Calu3 (cell line): ENCODE measurements at regions of chr9 and their contacts with region 1.

Region 1: DNA sequence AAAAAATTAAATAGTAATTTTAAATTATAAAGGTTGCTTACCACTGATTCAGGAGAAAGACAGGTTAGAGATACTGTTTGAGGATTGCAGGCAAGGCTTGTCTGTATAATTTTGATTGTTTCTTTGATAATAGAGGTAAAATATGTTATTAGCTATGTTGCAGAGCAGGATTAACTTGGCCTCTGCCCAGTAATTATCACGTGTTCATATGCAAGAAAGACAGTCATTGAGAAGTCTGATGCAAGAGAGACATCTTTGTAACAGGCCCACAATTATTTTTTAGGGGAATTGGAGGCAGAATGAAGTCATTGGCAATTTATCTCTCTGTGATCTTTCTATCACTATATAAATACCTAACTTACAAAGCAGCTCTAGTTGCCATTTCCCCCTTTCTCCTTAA is 45.9 kb downstream of the SLC44A1 start:
- DNase-seq: peak; percentile 30
- H3K4me3 Mint-ChIP-seq: no peak overlapping the region
- H3K27ac Mint-ChIP-seq: peak overlapping the region; percentile 68
- H3K4me1 Mint-ChIP-seq: peaks cover 23% of the 10 kb centered on the region
- H3K27me3 Mint-ChIP-seq: no peaks in the 10 kb centered on the region
- CTCF ChIP-seq: no peak

Region 2: DNA sequence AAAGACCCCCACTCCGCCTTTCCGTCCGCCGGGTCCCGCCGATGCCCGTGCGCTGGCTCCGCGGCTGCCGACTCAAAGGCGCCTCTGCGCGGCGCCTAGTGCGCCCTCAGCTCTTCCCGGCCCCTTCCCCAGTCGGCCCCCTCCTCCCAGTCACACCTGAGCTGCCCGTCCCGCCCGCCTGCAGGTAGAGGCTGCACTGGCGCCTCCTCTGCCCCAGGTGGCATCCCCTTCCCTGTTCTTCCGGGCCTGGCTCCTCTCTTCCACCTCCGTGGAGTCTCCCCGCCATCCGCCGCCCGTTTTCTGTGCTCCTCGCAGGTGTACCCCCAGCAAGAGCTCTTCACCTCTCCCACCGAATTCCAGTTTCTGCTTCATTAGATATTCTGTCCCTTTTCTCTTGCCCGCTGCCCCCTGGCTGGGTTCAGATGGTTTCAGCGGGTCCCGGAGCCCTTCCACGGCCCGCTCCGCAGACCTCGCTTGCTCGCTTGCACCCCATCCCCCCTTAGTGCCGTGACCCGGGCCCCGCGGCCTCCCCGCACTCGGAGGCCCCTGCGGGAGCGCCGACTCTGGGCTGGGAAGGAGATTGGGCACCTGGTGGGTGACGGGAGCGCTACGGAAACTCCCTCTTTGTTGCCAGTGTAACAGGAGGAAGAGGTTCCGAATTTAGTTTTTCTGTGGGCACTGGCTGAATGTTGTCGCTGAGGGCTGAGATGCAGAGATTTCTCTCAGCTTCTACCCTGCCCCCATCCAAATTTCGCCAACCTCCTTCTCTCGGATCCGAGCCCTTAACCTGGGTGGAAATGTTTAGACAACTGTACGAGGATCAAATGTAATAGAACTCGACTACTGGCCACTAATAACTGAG is 45.1 kb before region 1 on chr9:
- CTCF ChIA-PET with region 1: no interaction called
- intact Hi-C with region 1: loop called (anchors 2 kb)
- DNase-seq: peak; percentile 78
- H3K4me3 Mint-ChIP-seq: peak overlapping the region; percentile 96
- H3K27ac Mint-ChIP-seq: peak overlapping the region; percentile 70
- H3K4me1 Mint-ChIP-seq: peaks cover 7% of the 10 kb centered on the region
- H3K27me3 Mint-ChIP-seq: no peaks in the 10 kb centered on the region
- CTCF ChIP-seq: no peak